Right ventricle myocardium inferior (tissue), 1 donor: ENCODE measurements at regions of chr10 and their contacts with region 1.

Region 1: GRCh38 chr10:92573798-92574547 is at the start of gene IDE:
- DNase-seq: peak; percentile 95
- ATAC-seq: peak; percentile 98
- total RNA-seq, gene IDE: 49.9 TPM

Region 2: DNA sequence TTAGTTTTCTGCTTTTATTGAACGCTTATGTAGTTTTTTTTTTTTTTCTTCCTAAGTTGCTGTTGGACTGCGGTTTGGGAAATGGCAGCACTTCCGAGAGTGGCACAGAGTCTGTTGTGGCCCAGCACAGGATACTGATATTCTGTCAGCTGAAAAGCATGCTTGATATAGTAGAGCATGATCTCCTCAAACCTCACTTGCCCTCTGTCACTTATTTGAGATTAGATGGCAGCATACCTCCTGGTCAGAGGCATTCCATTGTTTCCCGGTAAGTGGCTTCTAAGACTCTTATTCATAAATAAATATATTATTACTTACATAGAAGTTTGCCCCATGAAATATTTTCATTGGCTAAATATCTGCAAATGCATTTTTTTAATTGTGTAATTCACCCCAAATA is 549.3 kb before region 1 on chr10:
- intact Hi-C with region 1: no loop called
- DNase-seq: no peak
- ATAC-seq: no peak

Region 3: GRCh38 chr10:92517034-92517655 is 56.8 kb before region 1 on chr10:
- intact Hi-C with region 1: loop called (anchors 1 kb)
- DNase-seq: no peak
- ATAC-seq: no peak

Region 4: DNA sequence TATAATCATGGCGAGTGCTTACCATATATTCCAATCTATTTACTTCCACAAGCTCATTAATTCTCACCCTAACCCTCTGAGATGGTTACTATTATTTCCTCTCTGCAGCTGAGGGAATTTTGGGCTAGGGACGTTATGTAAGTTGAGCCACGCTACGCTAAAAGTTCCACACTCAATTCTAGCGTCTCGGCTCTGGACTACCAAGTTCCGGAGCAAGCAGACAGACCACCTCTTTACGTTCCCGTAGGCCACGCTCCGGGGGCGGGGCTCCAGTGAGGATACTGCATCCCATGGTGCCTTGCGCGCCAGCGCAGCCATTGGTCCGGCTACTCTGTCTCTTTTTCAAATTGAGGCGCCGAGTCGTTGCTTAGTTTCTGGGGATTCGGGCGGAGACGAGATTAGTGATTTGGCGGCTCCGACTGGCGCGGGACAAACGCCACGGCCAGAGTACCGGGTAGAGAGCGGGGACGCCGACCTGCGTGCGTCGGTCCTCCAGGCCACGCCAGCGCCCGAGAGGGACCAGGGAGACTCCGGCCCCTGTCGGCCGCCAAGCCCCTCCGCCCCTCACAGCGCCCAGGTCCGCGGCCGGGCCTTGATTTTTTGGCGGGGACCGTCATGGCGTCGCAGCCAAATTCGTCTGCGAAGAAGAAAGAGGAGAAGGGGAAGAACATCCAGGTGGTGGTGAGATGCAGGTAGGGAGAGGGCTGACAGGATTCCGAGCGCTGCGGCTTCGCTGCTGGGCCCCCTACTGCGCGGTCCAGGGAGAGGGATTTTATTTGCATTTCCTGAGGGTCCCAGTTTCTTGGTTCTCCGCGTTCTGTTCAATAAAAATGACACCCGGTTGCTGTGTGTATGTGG is 19.0 kb after region 1 on chr10 and contains the start of gene KIF11:
- intact Hi-C with region 1: loop called (anchors 1 kb)
- DNase-seq: peak; percentile 100
- ATAC-seq: peak; percentile 97
- total RNA-seq, gene KIF11: 1.1 TPM

Region 5: DNA sequence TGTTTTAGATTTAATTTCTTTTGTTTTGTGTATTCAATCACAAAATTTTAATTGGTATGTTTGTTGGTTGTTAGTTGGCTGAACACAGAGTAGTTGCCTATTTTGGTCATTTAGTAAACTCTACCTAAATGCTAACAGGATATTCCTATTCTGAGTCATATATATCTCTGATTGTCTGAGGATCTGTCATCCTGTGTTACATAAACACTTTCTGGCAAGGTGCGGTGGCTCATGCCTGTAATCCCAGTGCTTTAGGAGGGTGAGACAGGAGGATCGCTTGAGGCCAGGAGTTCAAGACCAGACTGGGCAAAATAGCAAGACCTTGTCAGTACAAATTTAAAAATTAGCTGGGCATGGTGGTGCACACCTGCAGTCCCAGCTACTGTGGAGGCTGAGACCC is 1598.4 kb after region 1 on chr10:
- intact Hi-C with region 1: no loop called
- DNase-seq: no peak
- ATAC-seq: no peak